ENCODE measurements at regions of chr11 and their contacts with region 1.

Region 1: DNA sequence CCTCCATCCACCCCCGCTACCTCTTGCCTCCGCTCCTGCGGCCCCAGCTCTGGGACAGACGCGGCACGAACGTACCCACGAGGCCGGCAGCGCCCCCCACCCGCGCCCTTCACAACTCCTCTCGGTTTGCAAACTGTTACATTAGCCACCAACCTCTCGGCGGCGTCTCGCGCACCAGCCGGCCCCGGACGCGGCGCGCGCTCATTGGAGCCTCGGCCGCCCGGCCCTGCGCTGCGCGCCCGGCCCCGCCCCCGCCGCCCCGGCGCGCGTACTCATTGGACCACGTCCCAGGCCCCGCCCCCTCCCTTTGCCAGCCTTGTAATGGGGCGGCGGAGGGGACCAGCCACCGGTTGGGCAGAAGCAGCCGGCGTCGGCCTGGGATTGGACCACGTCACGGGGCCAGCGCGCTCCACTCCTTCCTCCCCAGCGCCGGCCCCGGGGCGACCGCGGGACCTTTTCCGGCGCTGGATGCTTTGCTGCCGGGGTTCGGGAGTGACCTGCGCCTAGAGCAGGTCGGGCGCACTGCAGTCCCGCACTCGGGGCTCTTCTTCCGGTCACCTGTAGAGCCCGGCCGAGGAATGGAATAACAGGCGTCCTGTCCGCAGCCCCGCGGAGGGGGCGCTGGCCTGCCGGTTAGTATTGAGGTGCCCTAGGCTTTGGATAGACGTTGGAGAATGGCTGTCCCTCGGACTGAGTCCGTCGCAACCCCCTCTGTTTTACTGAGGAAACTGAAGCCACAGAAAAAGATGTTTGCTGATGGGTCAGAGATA is at the start of gene HYOU1:
- DNase-seq: peak; percentile 94 to 99 (median 96)
- ATAC-seq: peak; percentile 93
- H3K4me3 ChIP-seq: peak within 1 kb of the TSS; percentile 98
- H3K27ac ChIP-seq: peak within 1 kb of the TSS; percentile 95
- H3K4me1 ChIP-seq: peaks cover 18 to 21% of the 10 kb centered on the region in 2 experiments; a peak in 3 of 5 replicates
- H3K27me3 ChIP-seq: no peaks in the 10 kb centered on the region
- CTCF ChIP-seq: peak; percentile 51 to 71 (median 54)
- EP300 ChIP-seq: no peak; the same call in 1 of the 2 replicates
- POLR2A ChIP-seq: peak; percentile 85
- RAD21 ChIP-seq: peak; percentile 13 to 27; a peak in 2 of 4 replicates
- polyA plus RNA-seq, gene HYOU1: 19.5 to 46.2 TPM

Region 2: GRCh38 chr11:119018074-119018938 is 38.9 kb before region 1 on chr11 and contains the starts of genes RPS25 and TRAPPC4:
- CTCF ChIA-PET with region 1: no interaction called
- POLR2A ChIA-PET with region 1: interaction called, 14 read pairs
- in situ Hi-C with region 1: no loop called
- intact Hi-C with region 1: loop called (anchors 2 kb)
- DNase-seq: peak; percentile 84 to 97 (median 86)
- ATAC-seq: peak; percentile 91
- H3K4me3 ChIP-seq: peak within 1 kb of the TSS; percentile 99
- H3K27ac ChIP-seq: peak within 1 kb of the TSS; percentile 97
- H3K4me1 ChIP-seq: peaks cover 9 to 12% of the 10 kb centered on the region in 2 experiments; a peak in 4 of 5 replicates
- H3K27me3 ChIP-seq: no peaks in the 10 kb centered on the region
- CTCF ChIP-seq: no peak
- EP300 ChIP-seq: 0 out of 2 replicates have a peak, but pooled peaks have one; percentile 2
- POLR2A ChIP-seq: peak; percentile 98
- RAD21 ChIP-seq: no peak
- polyA plus RNA-seq, gene RPS25: 2,471 to 2,886 TPM
- polyA plus RNA-seq, gene TRAPPC4: 455 to 524 TPM

Region 3: GRCh38 chr11:119038884-119039283 is 18.3 kb before region 1 on chr11:
- CTCF ChIA-PET with region 1: no interaction called
- POLR2A ChIA-PET with region 1: interaction called, 132 read pairs
- in situ Hi-C with region 1: no loop called
- intact Hi-C with region 1: no loop called
- DNase-seq: no peak
- ATAC-seq: no peak
- H3K4me3 ChIP-seq: no peak overlapping the region
- H3K27ac ChIP-seq: no peak overlapping the region
- H3K4me1 ChIP-seq: peaks cover 6% of the 10 kb centered on the region in 2 experiments; a peak in 3 of 5 replicates
- H3K27me3 ChIP-seq: no peaks in the 10 kb centered on the region
- CTCF ChIP-seq: no peak
- EP300 ChIP-seq: no peak
- POLR2A ChIP-seq: no peak
- RAD21 ChIP-seq: no peak

Region 4: GRCh38 chr11:119067371-119068222 is 10.4 kb after region 1 on chr11 and contains the start of gene VPS11:
- CTCF ChIA-PET with region 1: no interaction called
- POLR2A ChIA-PET with region 1: interaction called, 38 read pairs
- in situ Hi-C with region 1: no loop called
- intact Hi-C with region 1: no loop called
- DNase-seq: peak; percentile 93 to 99 (median 96)
- ATAC-seq: peak; percentile 94
- H3K4me3 ChIP-seq: peak within 1 kb of the TSS; percentile 57
- H3K27ac ChIP-seq: peak within 1 kb of the TSS; percentile 71
- H3K4me1 ChIP-seq: peaks cover 15 to 21% of the 10 kb centered on the region in 2 experiments; a peak in 4 of 5 replicates
- H3K27me3 ChIP-seq: no peaks in the 10 kb centered on the region
- CTCF ChIP-seq: no peak
- EP300 ChIP-seq: 0 out of 2 replicates have a peak, but pooled peaks have one; percentile 21
- POLR2A ChIP-seq: peak; percentile 80
- RAD21 ChIP-seq: no peak
- polyA plus RNA-seq, gene VPS11: 19.7 to 31.6 TPM

Region 5: GRCh38 chr11:119095066-119095880 is 38.1 kb after region 1 on chr11:
- CTCF ChIA-PET with region 1: no interaction called
- POLR2A ChIA-PET with region 1: interaction called, 22 read pairs
- in situ Hi-C with region 1: no loop called
- intact Hi-C with region 1: loop called (anchors 2 kb)
- DNase-seq: peak; percentile 96 to 99 (median 98)
- ATAC-seq: peak; percentile 81
- H3K4me3 ChIP-seq: peak overlapping the region; percentile 94
- H3K27ac ChIP-seq: peak overlapping the region; percentile 95
- H3K4me1 ChIP-seq: peaks cover 24 to 28% of the 10 kb centered on the region in 2 experiments; a peak in 4 of 5 replicates
- H3K27me3 ChIP-seq: no peaks in the 10 kb centered on the region; a peak in 1 of 5 replicates
- CTCF ChIP-seq: peak; percentile 19 to 43 (median 42); a peak in 3 of 6 replicates
- EP300 ChIP-seq: no peak
- POLR2A ChIP-seq: peak; percentile 100
- RAD21 ChIP-seq: peak; percentile 25 to 31

Measured in K562 (cell line).